Naive thymus-derived CD4-positive, alpha-beta T cell (primary cell): ENCODE measurements at regions of chr9 and their contacts with region 1.

Region 1: GRCh38 chr9:2181792-2182191 is 166.6 kb downstream of the SMARCA2 start:
- DNase-seq: no peak
- ATAC-seq: no peak
- H3K4me3 ChIP-seq: no peak overlapping the region
- H3K4me3 Mint-ChIP-seq: no peak overlapping the region
- H3K27ac ChIP-seq: no peak overlapping the region
- H3K27ac Mint-ChIP-seq: peak overlapping the region in 2 of 9 donors; percentile 14 to 22
- H3K4me1 ChIP-seq: no peaks in the 10 kb centered on the region
- H3K4me1 Mint-ChIP-seq: peaks cover 0 to 7% (median 4%) of the 10 kb centered on the region in 7 donors
- H3K27me3 ChIP-seq: no peaks in the 10 kb centered on the region
- H3K27me3 Mint-ChIP-seq: no peaks in the 10 kb centered on the region

Region 2: DNA sequence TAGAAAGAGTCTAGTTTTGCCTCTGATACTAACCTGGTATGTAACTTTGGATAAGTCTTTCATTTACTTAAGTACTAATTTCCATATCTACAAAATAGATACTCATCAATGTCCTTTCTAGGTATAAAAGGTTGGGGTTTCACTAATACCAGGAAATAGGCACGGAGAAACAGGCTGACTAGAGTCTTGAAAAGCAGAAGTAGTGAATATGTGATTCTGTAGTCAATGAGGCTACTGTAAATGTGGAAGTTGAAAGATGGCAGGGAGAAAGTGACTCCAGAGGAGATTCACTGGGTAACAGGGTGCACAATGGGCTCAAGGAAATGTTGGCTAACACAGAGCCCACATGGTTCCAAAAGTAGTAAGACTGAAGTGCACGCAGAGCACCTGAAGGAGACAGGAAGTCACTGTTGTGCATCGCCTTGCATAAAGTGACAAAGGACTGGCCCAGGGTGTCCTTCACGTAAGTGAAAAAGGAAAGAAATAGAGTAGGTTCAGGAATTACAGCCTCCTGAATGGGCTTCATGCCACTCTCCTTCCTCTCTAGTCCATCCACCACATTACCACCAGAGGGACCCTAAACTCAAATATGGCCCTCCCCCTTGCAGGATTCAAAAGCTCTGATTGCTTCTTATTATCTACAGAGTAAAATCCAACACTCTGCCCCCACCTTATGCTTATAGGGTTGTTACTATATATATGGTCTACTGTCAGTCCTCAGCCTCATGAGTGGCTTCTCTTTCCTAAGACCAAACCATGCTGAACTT is 454.6 kb before region 1 on chr9:
- CTCF ChIA-PET with region 1: no interaction called
- POLR2A ChIA-PET with region 1: no interaction called
- intact Hi-C with region 1: loop called in 1 of 2 experiments (anchors 10 kb)
- DNase-seq: peak in 5 of 9 donors; percentile 3 to 28 (median 8)
- ATAC-seq: no peak
- H3K4me3 ChIP-seq: no peak overlapping the region
- H3K4me3 Mint-ChIP-seq: no peak overlapping the region
- H3K27ac ChIP-seq: no peak overlapping the region
- H3K27ac Mint-ChIP-seq: no peak overlapping the region
- H3K4me1 ChIP-seq: no peaks in the 10 kb centered on the region
- H3K4me1 Mint-ChIP-seq: no peaks in the 10 kb centered on the region
- H3K27me3 ChIP-seq: no peaks in the 10 kb centered on the region
- H3K27me3 Mint-ChIP-seq: peaks cover 0 to 20% (median 11%) of the 10 kb centered on the region in 5 donors

Region 3: GRCh38 chr9:2199999-2200796 is 18.4 kb after region 1 on chr9:
- CTCF ChIA-PET with region 1: no interaction called
- POLR2A ChIA-PET with region 1: no interaction called
- intact Hi-C with region 1: no loop called
- DNase-seq: no peak
- ATAC-seq: no peak
- H3K4me3 ChIP-seq: no peak overlapping the region
- H3K4me3 Mint-ChIP-seq: no peak overlapping the region
- H3K27ac ChIP-seq: no peak overlapping the region
- H3K27ac Mint-ChIP-seq: no peak overlapping the region
- H3K4me1 ChIP-seq: no peaks in the 10 kb centered on the region
- H3K4me1 Mint-ChIP-seq: peaks cover 0 to 6% (median 0%) of the 10 kb centered on the region in 7 donors
- H3K27me3 ChIP-seq: no peaks in the 10 kb centered on the region
- H3K27me3 Mint-ChIP-seq: no peaks in the 10 kb centered on the region